ENCODE measurements at regions of chr14 and their contacts with region 1.

Region 1: DNA sequence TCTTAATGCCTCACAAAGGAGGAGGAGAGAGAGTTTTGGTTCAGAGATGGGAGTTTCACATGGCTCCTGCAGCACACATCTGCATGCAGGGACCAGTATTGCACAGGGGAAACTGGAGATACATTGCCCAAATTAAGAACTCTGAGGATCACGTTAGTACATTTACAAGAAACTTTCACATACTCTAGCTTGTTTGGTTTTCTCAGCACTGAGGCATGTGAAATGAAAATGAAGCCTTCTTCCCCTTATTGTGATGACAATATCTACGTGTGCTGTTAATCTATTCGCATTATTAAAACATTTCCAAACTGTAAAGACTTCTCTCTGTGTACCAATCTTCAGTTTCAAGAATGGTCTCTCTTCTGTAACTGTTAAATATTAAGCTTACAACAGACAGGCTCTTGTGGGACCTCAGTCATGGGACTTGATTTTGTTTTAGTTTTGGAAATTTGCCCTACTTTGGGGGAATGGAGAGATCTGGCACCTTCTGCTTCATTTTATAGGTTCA is 124.7 kb downstream of the DAAM1 start:
- DNase-seq: peak; percentile 33
- ATAC-seq: no peak
- H3K4me3 ChIP-seq: peak overlapping the region in 1 of 3 experiments; percentile 1; a peak in 1 of 6 replicates
- H3K27ac ChIP-seq: peak overlapping the region; percentile 78
- H3K4me1 ChIP-seq: peaks cover 80% of the 10 kb centered on the region
- H3K27me3 ChIP-seq: no peaks in the 10 kb centered on the region
- CTCF ChIP-seq: no peak
- EP300 ChIP-seq: no peak
- POLR2A ChIP-seq: no peak
- RAD21 ChIP-seq: no peak

Region 2: GRCh38 chr14:59189786-59190771 is 123.1 kb before region 1 on chr14:
- CTCF ChIA-PET with region 1: no interaction called
- POLR2A ChIA-PET with region 1: interaction called, 4 read pairs
- in situ Hi-C with region 1: no loop called
- intact Hi-C with region 1: loop called (anchors 5 kb)
- DNase-seq: peak; percentile 75
- ATAC-seq: peak; percentile 36
- H3K4me3 ChIP-seq: peak overlapping the region; percentile 84 to 87 (median 86)
- H3K27ac ChIP-seq: peak overlapping the region; percentile 91
- H3K4me1 ChIP-seq: peaks cover 53% of the 10 kb centered on the region
- H3K27me3 ChIP-seq: peaks cover 0 to 1% of the 10 kb centered on the region in 2 experiments; a peak in 2 of 5 replicates
- CTCF ChIP-seq: peak; percentile 44
- EP300 ChIP-seq: no peak
- POLR2A ChIP-seq: peak in 1 of 2 experiments; percentile 36; a peak in 1 of 4 replicates
- RAD21 ChIP-seq: no peak

Region 3: GRCh38 chr14:59215325-59216181 is 97.6 kb before region 1 on chr14:
- CTCF ChIA-PET with region 1: no interaction called
- POLR2A ChIA-PET with region 1: no interaction called
- in situ Hi-C with region 1: no loop called
- intact Hi-C with region 1: loop called (anchors 5 kb)
- DNase-seq: peak; percentile 78
- ATAC-seq: peak; percentile 97
- H3K4me3 ChIP-seq: peak overlapping the region; percentile 19 to 63 (median 38); a peak in 5 of 6 replicates
- H3K27ac ChIP-seq: peak overlapping the region; percentile 62
- H3K4me1 ChIP-seq: peaks cover 62% of the 10 kb centered on the region
- H3K27me3 ChIP-seq: no peaks in the 10 kb centered on the region
- CTCF ChIP-seq: no peak; the same call in 1 of the 2 replicates
- EP300 ChIP-seq: no peak
- POLR2A ChIP-seq: no peak
- RAD21 ChIP-seq: peak; percentile 18; the same call in 1 of the 2 replicates

Region 4: DNA sequence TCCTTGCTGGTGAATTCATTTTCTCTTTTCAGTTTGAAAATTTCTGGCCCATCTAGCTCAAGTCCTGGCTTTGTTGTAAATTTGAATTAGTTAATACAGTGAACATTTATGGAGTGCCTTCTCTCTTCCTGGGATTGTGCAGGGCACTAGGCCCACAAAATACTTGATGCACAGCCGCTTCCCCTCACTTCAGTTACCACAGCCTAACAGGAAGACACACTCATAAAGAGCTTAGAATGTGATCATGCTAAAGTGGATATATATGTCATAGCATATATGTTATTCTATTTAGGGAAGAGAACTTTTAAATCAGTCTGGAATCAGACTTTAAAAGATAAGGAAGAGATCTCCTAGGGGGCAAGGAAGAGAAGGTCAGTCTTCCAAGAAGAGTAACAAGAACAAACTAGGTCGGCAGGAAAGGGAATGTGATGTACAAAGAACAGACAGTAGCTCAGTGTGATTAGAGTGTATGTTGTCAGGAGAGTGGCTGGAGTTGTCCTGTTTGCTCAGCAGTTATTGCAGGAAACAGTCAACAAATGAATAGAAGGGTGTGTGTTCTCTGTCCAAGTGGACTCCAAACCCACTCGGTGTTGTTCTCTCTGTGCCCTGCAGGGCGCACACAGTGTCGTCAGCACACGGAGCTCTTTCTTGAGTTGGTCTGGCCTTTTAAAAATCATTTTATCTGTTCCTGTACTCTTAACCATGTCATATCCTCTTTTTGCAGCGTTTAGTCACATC is 50.3 kb before region 1 on chr14:
- CTCF ChIA-PET with region 1: interaction called, 3 read pairs
- POLR2A ChIA-PET with region 1: interaction called, 6 read pairs
- in situ Hi-C with region 1: no loop called
- intact Hi-C with region 1: loop called (anchors 5 kb)
- DNase-seq: peak; percentile 95
- ATAC-seq: peak; percentile 100
- H3K4me3 ChIP-seq: peak overlapping the region in 2 of 3 experiments; percentile 28 to 38; a peak in 2 of 6 replicates
- H3K27ac ChIP-seq: peak overlapping the region; percentile 84
- H3K4me1 ChIP-seq: peaks cover 47% of the 10 kb centered on the region
- H3K27me3 ChIP-seq: no peaks in the 10 kb centered on the region
- CTCF ChIP-seq: peak; percentile 68
- EP300 ChIP-seq: peak in 1 of 2 experiments; percentile 83; a peak in 2 of 4 replicates
- POLR2A ChIP-seq: no peak
- RAD21 ChIP-seq: peak; percentile 60

Region 5: GRCh38 chr14:59275653-59276052 is 37.5 kb before region 1 on chr14:
- CTCF ChIA-PET with region 1: no interaction called
- POLR2A ChIA-PET with region 1: interaction called, 3 read pairs
- in situ Hi-C with region 1: no loop called
- intact Hi-C with region 1: loop called (anchors 5 kb)
- DNase-seq: peak; percentile 66
- ATAC-seq: peak; percentile 75
- H3K4me3 ChIP-seq: no peak overlapping the region
- H3K27ac ChIP-seq: no peak overlapping the region
- H3K4me1 ChIP-seq: peaks cover 34% of the 10 kb centered on the region
- H3K27me3 ChIP-seq: no peaks in the 10 kb centered on the region
- CTCF ChIP-seq: no peak
- EP300 ChIP-seq: no peak
- POLR2A ChIP-seq: no peak
- RAD21 ChIP-seq: no peak

Measured in HepG2 (cell line).